Panc1 (cell line): ENCODE measurements at regions of chr2 and their contacts with region 1.

Region 1: GRCh38 chr2:229273723-229274338 is 2.7 kb upstream of the PID1 start:
- DNase-seq: peak; percentile 61
- ATAC-seq: peak; percentile 90
- H3K4me3 ChIP-seq: peak overlapping the region in 1 of 2 experiments; percentile 15; a peak in 1 of 4 replicates
- H3K27ac ChIP-seq: no peak overlapping the region
- H3K4me1 ChIP-seq: peaks cover 4% of the 10 kb centered on the region
- H3K27me3 ChIP-seq: peaks cover 12% of the 10 kb centered on the region; the same call in 1 of the 2 replicates
- CTCF ChIP-seq: peak; percentile 86

Region 2: GRCh38 chr2:227890495-227891079 is 1383.2 kb before region 1 on chr2:
- CTCF ChIA-PET with region 1: no interaction called
- POLR2A ChIA-PET with region 1: no interaction called
- in situ Hi-C with region 1: no loop called
- intact Hi-C with region 1: loop called (anchors 10 kb)
- DNase-seq: no peak
- ATAC-seq: peak; percentile 85
- H3K4me3 ChIP-seq: no peak overlapping the region
- H3K27ac ChIP-seq: no peak overlapping the region
- H3K4me1 ChIP-seq: no peaks in the 10 kb centered on the region
- H3K27me3 ChIP-seq: no peaks in the 10 kb centered on the region
- CTCF ChIP-seq: peak; percentile 51; the same call in 1 of the 2 replicates

Region 3: DNA sequence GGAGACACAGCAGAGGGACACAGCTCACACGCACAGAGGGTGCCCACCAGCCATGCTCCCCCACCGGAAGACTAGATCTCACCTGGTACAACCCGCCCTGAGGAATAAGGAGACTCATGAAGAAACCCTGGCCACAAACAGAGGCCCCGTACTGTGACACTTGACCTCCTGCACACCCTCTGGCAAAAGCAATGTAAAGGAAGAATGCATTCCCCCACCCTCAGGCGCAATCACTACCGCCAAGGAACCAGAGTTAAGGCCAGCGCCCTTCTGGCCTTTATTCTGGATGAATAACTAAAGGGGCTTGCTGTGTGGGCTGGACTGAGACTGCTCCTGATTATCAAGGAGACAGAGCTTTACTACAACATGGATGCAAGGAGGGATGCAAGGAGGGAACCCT is 583.1 kb before region 1 on chr2:
- CTCF ChIA-PET with region 1: no interaction called
- POLR2A ChIA-PET with region 1: no interaction called
- in situ Hi-C with region 1: no loop called
- intact Hi-C with region 1: loop called (anchors 5 kb)
- DNase-seq: no peak
- ATAC-seq: no peak
- H3K4me3 ChIP-seq: no peak overlapping the region
- H3K27ac ChIP-seq: no peak overlapping the region
- H3K4me1 ChIP-seq: no peaks in the 10 kb centered on the region
- H3K27me3 ChIP-seq: no peaks in the 10 kb centered on the region
- CTCF ChIP-seq: no peak

Region 4: DNA sequence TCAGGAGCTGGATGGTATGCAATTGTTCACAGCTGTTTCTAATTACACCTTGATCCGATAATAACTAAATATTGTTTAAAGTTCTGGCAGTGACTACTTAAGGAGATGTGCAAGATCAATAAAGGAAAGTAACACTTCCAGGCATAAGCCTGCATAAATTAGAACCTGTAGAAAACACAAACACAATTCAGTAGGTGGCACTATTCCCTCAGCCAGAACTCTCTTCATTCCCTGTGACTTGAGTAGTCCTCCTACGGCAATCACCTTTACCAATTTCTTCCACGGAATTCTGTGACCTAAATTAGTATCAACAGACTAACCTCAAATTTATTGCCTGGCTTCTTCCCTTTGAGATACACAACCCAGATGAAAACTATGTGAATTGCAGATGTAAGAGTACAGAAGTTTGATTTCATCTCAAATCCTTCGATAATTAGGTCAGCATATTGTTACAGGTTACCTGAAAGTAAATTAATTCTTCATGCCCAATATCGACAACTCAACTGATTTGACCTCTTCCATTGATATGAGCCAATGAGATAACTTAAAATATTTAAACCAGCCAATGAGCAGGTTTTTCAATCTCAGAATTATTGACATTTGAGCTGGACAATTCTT is 140.6 kb before region 1 on chr2:
- CTCF ChIA-PET with region 1: interaction called, 3 read pairs
- POLR2A ChIA-PET with region 1: no interaction called
- in situ Hi-C with region 1: no loop called
- intact Hi-C with region 1: loop called (anchors 1 kb)
- DNase-seq: peak; percentile 39
- ATAC-seq: peak; percentile 77; the same call in 1 of the 2 replicates
- H3K4me3 ChIP-seq: no peak overlapping the region
- H3K27ac ChIP-seq: no peak overlapping the region
- H3K4me1 ChIP-seq: peaks cover 5% of the 10 kb centered on the region; the same call in 1 of the 2 replicates
- H3K27me3 ChIP-seq: no peaks in the 10 kb centered on the region; the same call in 1 of the 2 replicates
- CTCF ChIP-seq: peak; percentile 67; the same call in 1 of the 2 replicates

Region 5: GRCh38 chr2:229297247-229297646 is 23.4 kb after region 1 on chr2:
- CTCF ChIA-PET with region 1: interaction called, 10 read pairs
- POLR2A ChIA-PET with region 1: no interaction called
- in situ Hi-C with region 1: no loop called
- intact Hi-C with region 1: no loop called
- DNase-seq: no peak
- ATAC-seq: no peak
- H3K4me3 ChIP-seq: no peak overlapping the region
- H3K27ac ChIP-seq: no peak overlapping the region
- H3K4me1 ChIP-seq: no peaks in the 10 kb centered on the region
- H3K27me3 ChIP-seq: no peaks in the 10 kb centered on the region
- CTCF ChIP-seq: no peak

Region 6: GRCh38 chr2:229348128-229348527 is 74.3 kb after region 1 on chr2:
- CTCF ChIA-PET with region 1: no interaction called
- POLR2A ChIA-PET with region 1: no interaction called
- in situ Hi-C with region 1: no loop called
- intact Hi-C with region 1: no loop called
- DNase-seq: no peak
- ATAC-seq: no peak
- H3K4me3 ChIP-seq: no peak overlapping the region
- H3K27ac ChIP-seq: no peak overlapping the region
- H3K4me1 ChIP-seq: no peaks in the 10 kb centered on the region
- H3K27me3 ChIP-seq: no peaks in the 10 kb centered on the region
- CTCF ChIP-seq: no peak

Region 7: DNA sequence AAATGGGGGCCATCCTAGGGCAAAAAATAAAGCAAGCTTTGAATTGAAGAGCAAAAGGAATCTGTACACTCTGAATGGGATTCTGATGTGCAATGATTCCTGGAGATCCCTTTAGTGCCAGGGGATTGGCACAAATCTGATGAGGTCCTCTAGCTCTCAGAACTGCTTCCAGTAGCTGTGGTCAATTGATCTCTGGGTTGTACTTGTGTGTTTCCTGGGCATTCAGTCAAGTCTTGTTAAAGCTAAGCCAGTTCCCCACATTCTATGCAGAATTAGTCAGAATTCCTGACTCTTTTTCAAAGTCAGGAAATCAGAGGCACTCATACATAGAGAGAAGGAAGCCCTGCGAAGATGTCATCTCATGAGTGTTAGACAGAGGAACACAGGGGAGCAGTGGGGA is 279.3 kb after region 1 on chr2:
- CTCF ChIA-PET with region 1: no interaction called
- POLR2A ChIA-PET with region 1: no interaction called
- in situ Hi-C with region 1: no loop called
- intact Hi-C with region 1: no loop called
- DNase-seq: no peak
- ATAC-seq: no peak
- H3K4me3 ChIP-seq: no peak overlapping the region
- H3K27ac ChIP-seq: no peak overlapping the region
- H3K4me1 ChIP-seq: no peaks in the 10 kb centered on the region
- H3K27me3 ChIP-seq: no peaks in the 10 kb centered on the region
- CTCF ChIP-seq: no peak